Heart left ventricle (tissue), 16 donors: ENCODE measurements at regions of chrX and their contacts with region 1.

Region 1: GRCh38 chrX:50381729-50382415 is 88.8 kb downstream of the DGKK start:
- DNase-seq: no peak
- ATAC-seq: no peak
- H3K4me3 ChIP-seq: no peak overlapping the region
- H3K27ac ChIP-seq: no peak overlapping the region
- H3K4me1 ChIP-seq: no peaks in the 10 kb centered on the region
- H3K27me3 ChIP-seq: peaks cover 0 to 20% (median 0%) of the 10 kb centered on the region in 9 donors
- CTCF ChIP-seq: no peak
- POLR2A ChIP-seq: no peak

Region 2: DNA sequence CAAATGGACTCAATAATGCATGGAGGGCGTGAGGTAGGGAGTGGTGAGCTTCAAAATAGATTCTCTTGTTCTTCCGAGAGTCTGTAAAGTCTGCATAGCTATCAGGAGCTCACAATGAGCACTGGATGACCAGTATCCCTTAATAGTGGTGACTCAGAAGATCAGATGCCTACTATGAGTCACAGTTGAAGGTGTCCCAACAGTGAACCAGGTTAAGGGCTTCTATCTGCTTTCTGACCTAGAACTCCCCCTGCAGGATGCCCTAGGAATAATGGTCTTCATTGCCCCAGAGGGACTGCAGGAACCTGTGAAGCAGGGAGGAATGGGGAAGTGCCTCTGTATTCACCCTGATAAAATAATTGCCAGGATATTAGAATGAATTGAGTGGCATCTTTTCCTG is 66.7 kb after region 1 on chrX:
- intact Hi-C with region 1: loop called in 1 of 10 experiments (anchors 10 kb)
- DNase-seq: no peak
- ATAC-seq: no peak
- H3K4me3 ChIP-seq: no peak overlapping the region
- H3K27ac ChIP-seq: no peak overlapping the region
- H3K4me1 ChIP-seq: no peaks in the 10 kb centered on the region
- H3K27me3 ChIP-seq: peaks cover 0 to 64% (median 0%) of the 10 kb centered on the region in 9 donors
- CTCF ChIP-seq: no peak
- POLR2A ChIP-seq: no peak